BJ (cell line): ENCODE measurements at regions of chr12 and their contacts with region 1.

Region 1: DNA sequence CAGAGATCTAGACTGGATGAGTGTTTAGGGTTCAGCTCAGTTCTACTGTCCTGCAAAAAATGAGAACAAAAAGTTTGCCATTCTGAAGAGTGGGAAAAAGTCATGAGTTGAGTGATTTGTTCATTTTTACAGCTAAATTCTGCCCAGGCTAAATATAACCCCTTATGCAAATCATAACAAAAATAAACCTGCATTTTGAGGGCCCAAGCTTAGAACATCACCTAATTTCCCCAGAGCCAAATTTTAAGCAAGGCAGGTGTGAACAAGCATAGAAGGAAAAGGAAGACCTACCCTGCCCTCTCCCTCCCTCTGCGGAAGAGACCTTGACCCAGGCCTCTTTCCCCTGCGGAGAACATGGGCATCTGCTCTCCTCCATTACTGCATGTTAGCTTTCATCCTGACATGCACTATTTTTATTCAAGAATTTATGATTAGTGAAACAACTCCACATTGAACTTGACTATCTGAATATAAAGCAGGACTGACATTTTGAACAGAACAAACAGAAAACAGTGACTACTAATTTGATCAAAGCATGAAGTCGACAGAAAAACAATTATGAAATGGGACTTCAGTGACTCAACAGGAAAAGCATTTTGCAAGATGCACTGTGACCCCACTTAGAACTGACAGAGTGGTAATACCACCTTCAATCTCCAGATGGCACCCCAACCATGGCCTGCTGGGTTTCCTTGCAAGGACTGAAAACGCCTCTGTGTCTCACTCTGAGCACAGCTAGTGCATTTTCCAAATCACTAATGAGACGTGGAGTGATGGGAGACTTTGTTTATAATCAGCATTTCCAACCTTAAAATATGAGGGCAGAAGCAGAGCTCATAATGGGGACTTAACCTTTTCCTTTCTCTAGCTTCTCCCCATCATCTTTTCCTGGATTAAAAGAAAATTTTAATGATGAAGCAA is 30.9 kb upstream of the SELPLG start:
- DNase-seq: peak; percentile 89
- H3K4me3 ChIP-seq: no peak overlapping the region
- H3K27me3 ChIP-seq: no peaks in the 10 kb centered on the region
- CTCF ChIP-seq: peak; percentile 92

Region 2: GRCh38 chr12:108618079-108618952 is 46.3 kb before region 1 on chr12:
- CTCF ChIA-PET with region 1: interaction called, 17 read pairs
- POLR2A ChIA-PET with region 1: no interaction called
- DNase-seq: no peak
- H3K4me3 ChIP-seq: no peak overlapping the region
- H3K27me3 ChIP-seq: no peaks in the 10 kb centered on the region
- CTCF ChIP-seq: peak; percentile 97

Region 3: GRCh38 chr12:108731866-108732461 is 67.4 kb after region 1 on chr12:
- CTCF ChIA-PET with region 1: interaction called, 14 read pairs
- POLR2A ChIA-PET with region 1: no interaction called
- DNase-seq: peak; percentile 84
- H3K4me3 ChIP-seq: peak overlapping the region; percentile 98
- H3K27me3 ChIP-seq: no peaks in the 10 kb centered on the region
- CTCF ChIP-seq: no peak

Region 4: GRCh38 chr12:108788076-108788782 is 123.6 kb after region 1 on chr12:
- CTCF ChIA-PET with region 1: interaction called, 13 read pairs
- POLR2A ChIA-PET with region 1: no interaction called
- DNase-seq: no peak
- H3K4me3 ChIP-seq: no peak overlapping the region
- H3K27me3 ChIP-seq: no peaks in the 10 kb centered on the region
- CTCF ChIP-seq: no peak

Region 5: DNA sequence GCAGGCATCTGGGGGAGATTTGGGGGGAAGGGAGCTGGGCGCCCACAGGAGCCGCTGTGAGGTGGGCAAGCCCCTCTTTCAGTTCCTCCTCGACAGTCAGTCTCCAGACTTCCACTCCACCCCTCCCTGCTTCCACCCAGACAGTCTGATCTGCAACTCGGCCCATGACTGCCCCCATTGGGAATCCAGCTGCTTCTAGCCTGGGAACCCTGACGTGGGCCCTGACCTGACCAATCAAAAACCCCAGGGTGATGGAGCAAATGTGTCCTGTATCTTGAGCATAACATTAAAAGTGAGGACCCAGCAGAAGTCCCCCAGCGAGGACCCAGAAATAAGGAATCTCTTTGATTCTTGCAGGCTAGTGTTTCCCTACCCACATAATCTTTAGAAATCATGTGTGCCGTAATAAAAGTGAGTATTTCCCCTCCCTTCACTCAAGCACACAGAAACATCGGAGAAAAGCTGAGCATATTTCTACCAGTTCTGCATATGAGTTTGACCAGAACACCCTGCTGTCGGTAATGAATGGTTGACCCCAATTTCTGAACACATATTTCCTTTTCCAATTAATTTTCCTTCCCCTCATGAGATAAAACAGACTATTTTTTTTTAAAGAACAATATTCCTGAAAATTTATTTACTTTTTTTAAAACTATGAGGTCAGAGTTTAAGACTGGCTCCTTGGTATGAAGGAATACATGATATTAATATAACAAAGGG is 186.4 kb after region 1 on chr12:
- CTCF ChIA-PET with region 1: no interaction called
- POLR2A ChIA-PET with region 1: interaction called, 12 read pairs
- DNase-seq: no peak
- H3K4me3 ChIP-seq: no peak overlapping the region
- H3K27me3 ChIP-seq: no peaks in the 10 kb centered on the region
- CTCF ChIP-seq: no peak

Region 6: DNA sequence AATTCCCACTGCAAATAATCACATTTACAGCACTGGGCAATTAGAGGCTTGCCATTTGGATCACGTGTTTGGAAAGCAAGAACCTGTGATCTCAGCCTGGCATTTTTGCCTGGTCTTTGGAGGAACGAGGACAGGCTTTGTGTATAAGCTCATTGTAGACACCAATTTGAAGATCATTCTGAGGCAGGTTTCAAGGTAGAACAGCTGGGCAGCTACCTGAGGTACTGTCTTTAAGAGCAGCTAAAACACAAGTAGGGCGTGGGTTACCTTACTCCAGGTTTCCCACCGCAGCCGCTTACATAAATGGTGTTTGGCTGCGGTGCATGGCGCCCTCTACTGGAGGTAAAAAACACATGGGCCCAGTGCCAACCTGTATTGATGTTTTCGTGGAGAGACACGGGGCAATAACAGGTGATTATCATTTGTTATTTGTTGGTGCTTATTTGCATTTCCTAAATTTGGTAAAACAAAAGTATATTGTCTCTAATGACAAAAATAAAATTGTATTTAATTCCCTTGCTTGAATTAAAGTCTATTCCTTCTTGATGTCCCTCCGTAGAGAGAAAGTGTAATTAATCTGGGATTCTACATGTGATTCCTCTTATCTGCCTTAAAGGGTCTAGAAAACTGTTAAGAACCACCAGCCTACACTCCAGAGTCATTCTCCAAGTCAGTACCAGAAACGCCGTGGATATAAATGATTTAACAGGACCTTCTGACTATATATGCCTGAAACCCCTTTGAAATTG is 286.6 kb after region 1 on chr12:
- CTCF ChIA-PET with region 1: interaction called, 14 read pairs
- POLR2A ChIA-PET with region 1: no interaction called
- DNase-seq: peak; percentile 4
- H3K4me3 ChIP-seq: no peak overlapping the region
- H3K27me3 ChIP-seq: no peaks in the 10 kb centered on the region; the same call in 1 of the 2 replicates
- CTCF ChIP-seq: peak; percentile 84